Sigmoid colon (tissue), 7 donors: ENCODE measurements at regions of chr22 and their contacts with region 1.

Region 1: GRCh38 chr22:45553351-45554039 is 50.8 kb downstream of the FBLN1 start:
- DNase-seq: peak; percentile 90
- H3K4me3 ChIP-seq: peak overlapping the region in 3 of 4 donors; percentile 0 to 22 (median 8)
- H3K27ac ChIP-seq: peak overlapping the region; percentile 79 to 89 (median 84)
- H3K4me1 ChIP-seq: peaks cover 0 to 61% (median 59%) of the 10 kb centered on the region in 4 donors
- H3K27me3 ChIP-seq: no peaks in the 10 kb centered on the region
- CTCF ChIP-seq: peak; percentile 93 to 98 (median 96)
- EP300 ChIP-seq: no peak
- POLR2A ChIP-seq: no peak

Region 2: DNA sequence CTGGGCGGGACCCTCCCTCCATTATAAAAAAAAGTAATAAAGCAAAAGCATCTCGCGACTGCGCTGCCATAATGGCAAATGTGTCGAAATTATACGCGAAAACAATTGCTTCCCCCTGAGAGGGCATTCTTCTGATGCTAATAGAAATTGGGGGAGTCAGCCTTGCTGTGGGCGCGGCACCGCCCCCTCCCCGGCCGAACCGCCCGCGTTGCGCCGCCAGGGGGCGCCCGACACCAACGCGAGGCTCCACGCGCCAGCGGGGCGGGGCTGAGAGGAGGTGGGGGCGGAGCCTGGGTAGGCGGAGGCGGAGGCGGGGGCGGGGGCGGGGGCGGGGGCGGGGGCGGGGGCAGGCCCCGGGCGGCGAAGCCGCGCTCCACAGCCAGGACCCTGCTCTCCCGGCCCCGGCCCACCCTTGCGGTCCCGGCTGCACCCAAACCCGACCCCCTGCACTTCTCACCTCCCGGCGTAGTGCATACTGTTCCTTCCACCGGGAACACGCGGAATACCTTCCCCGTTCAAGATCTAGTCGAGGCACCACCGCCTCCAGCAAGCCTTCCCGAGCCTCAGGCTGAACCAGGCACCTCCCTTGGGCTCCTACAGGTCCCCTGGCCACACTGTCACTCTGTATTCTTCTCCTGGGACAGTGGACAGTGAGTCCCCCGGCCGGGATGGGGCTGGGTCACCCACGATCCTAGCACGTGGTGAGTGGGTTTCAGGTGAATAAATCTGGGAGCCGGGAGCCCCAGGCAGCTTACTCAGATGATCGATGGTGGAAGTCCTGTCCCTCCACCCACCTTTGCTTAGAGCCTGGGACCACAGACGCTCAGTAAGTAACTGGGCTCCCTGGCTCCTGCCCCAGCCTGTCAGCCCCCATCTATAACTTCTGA is 284.3 kb before region 1 on chr22:
- intact Hi-C with region 1: loop called (anchors 1 kb)
- DNase-seq: peak; percentile 92
- H3K4me3 ChIP-seq: peak overlapping the region; percentile 39 to 61 (median 56)
- H3K27ac ChIP-seq: peak overlapping the region; percentile 46 to 66 (median 60)
- H3K4me1 ChIP-seq: peaks cover 0 to 30% (median 26%) of the 10 kb centered on the region in 4 donors
- H3K27me3 ChIP-seq: no peaks in the 10 kb centered on the region
- CTCF ChIP-seq: peak; percentile 67 to 86 (median 80)
- EP300 ChIP-seq: no peak
- POLR2A ChIP-seq: peak in 1 of 2 donors; percentile 11

Region 3: GRCh38 chr22:45318168-45318557 is 235.3 kb before region 1 on chr22:
- intact Hi-C with region 1: loop called (anchors 5 kb)
- DNase-seq: peak; percentile 94
- H3K4me3 ChIP-seq: peak overlapping the region in 2 of 4 donors; percentile 2 to 11
- H3K27ac ChIP-seq: peak overlapping the region; percentile 81 to 92 (median 90)
- H3K4me1 ChIP-seq: peaks cover 0 to 32% (median 28%) of the 10 kb centered on the region in 4 donors
- H3K27me3 ChIP-seq: no peaks in the 10 kb centered on the region
- CTCF ChIP-seq: no peak
- EP300 ChIP-seq: peak in 1 of 4 donors; percentile 27
- POLR2A ChIP-seq: no peak

Region 4: DNA sequence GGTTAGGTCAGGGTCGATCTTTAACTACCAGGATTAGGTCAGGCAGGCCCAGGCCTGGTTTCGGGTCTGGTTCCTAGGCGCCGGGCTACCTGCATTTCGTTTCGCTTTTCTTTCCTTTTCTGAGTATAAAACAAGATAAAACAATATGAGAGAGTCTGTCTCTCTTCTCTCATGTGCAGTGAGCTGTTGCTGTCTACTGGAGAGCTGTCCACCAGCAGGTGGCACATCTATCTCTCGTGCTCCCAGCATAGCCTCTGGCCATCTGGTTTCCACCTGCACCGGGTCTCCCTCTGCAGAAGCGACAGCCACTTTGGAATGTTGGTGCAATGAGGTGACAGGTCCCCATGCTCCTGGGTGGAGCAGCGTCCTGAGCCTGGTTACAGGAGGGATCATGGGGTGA is 112.4 kb before region 1 on chr22:
- intact Hi-C with region 1: loop called (anchors 1 kb)
- DNase-seq: peak; percentile 84
- H3K4me3 ChIP-seq: no peak overlapping the region
- H3K27ac ChIP-seq: peak overlapping the region in 1 of 4 donors; percentile 17
- H3K4me1 ChIP-seq: peaks cover 0 to 7% (median 2%) of the 10 kb centered on the region in 4 donors
- H3K27me3 ChIP-seq: no peaks in the 10 kb centered on the region
- CTCF ChIP-seq: peak; percentile 51 to 69 (median 68)
- EP300 ChIP-seq: no peak
- POLR2A ChIP-seq: no peak